Activated B cell treated with CpG ODN at 0.5 μM for 24 hours (primary cell): ENCODE measurements at regions of chr7 and their contacts with region 1.

Region 1: GRCh38 chr7:101173752-101174244 is 6.3 kb downstream of the NAT16 start:
- DNase-seq: peak; percentile 46
- ATAC-seq: peak; percentile 53
- H3K4me3 Mint-ChIP-seq: peak overlapping the region; percentile 8
- H3K27ac Mint-ChIP-seq: no peak overlapping the region
- H3K4me1 Mint-ChIP-seq: peaks cover 48% of the 10 kb centered on the region
- H3K27me3 Mint-ChIP-seq: peaks cover 71% of the 10 kb centered on the region
- CTCF ChIP-seq: no peak

Region 2: GRCh38 chr7:101186844-101187428 is 13.1 kb after region 1 on chr7:
- CTCF ChIA-PET with region 1: no interaction called
- POLR2A ChIA-PET with region 1: no interaction called
- intact Hi-C with region 1: no loop called
- DNase-seq: no peak
- ATAC-seq: no peak
- H3K4me3 Mint-ChIP-seq: no peak overlapping the region
- H3K27ac Mint-ChIP-seq: no peak overlapping the region
- H3K4me1 Mint-ChIP-seq: peaks cover 4% of the 10 kb centered on the region
- H3K27me3 Mint-ChIP-seq: peaks cover 14% of the 10 kb centered on the region
- CTCF ChIP-seq: no peak

Region 3: DNA sequence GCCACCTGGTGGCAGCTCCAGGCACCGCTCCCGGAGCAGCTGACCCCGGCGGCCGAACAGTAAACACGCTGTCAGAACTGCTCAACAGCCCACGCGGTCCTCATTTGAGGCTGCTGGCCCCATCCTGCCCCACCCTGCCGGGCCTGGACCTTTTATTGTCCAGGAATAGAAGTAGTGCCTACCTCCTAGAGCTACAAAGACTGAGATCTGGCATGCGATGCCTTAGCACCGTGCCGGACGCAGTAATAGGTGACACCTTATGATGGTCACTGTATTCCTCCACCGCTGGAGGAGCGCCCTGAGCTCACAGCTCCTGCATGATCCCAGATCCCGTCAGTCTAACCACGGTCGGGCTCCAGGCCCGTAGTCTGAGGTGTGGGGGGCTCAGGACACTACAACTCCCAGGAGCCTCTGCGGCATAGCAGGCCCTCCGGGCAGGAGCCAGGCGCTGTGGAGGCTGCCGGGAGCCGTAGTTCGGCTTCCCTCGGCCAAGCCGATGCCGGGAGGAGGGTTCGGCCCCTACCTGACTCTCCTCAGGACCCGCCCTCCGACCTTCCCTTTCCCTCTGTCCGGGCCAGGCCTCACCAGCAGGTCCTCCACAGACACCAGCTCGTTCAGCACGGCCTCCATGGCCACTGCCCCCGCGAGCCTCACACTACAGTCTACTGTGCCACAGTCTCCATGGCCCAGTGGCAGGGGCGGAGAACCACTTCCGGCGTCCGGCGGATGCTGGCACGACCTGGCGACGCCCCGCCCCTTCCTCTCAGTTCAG is 70.8 kb after region 1 on chr7 and contains the start of gene FIS1:
- CTCF ChIA-PET with region 1: no interaction called
- POLR2A ChIA-PET with region 1: no interaction called
- intact Hi-C with region 1: loop called (anchors 2 kb)
- DNase-seq: peak; percentile 96
- ATAC-seq: peak; percentile 94
- H3K4me3 Mint-ChIP-seq: peak within 1 kb of the TSS; percentile 95
- H3K27ac Mint-ChIP-seq: peak within 1 kb of the TSS; percentile 95
- H3K4me1 Mint-ChIP-seq: peaks cover 42% of the 10 kb centered on the region
- H3K27me3 Mint-ChIP-seq: no peaks in the 10 kb centered on the region
- CTCF ChIP-seq: no peak
- total RNA-seq, gene FIS1: 113 and 117 TPM in 2 replicates